ENCODE measurements at regions of chr11 and their contacts with region 1.

Region 1: GRCh38 chr11:97794876-97795275 is 1225.9 kb upstream of the CNTN5 start:
- DNase-seq: no peak
- ATAC-seq: no peak
- H3K4me3 Mint-ChIP-seq: no peak overlapping the region
- H3K27ac Mint-ChIP-seq: no peak overlapping the region
- H3K4me1 Mint-ChIP-seq: no peaks in the 10 kb centered on the region
- H3K27me3 Mint-ChIP-seq: no peaks in the 10 kb centered on the region

Region 2: DNA sequence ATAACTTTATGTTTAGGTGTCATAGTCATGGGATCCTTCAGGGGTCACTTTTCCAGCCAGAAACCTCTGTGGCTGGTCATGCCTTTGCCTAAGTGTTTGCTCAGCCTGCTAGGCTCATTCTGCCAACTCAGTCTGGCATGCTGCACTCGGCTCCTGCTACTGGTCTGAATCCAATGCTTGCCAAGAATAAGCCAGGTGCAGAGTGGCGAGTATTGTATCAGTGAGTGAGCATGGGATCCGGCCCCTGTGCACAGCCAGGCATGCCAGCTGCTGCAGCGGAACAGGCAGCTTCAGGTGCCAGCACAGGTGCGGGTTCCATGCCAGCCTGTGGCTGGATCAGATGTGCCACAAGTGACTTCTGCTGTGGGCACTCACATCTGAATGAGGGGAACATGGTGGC is 43.5 kb before region 1 on chr11:
- CTCF ChIA-PET with region 1: no interaction called
- POLR2A ChIA-PET with region 1: no interaction called
- intact Hi-C with region 1: loop called in 1 of 2 experiments (anchors 5 kb)
- DNase-seq: no peak
- ATAC-seq: no peak
- H3K4me3 Mint-ChIP-seq: no peak overlapping the region
- H3K27ac Mint-ChIP-seq: no peak overlapping the region
- H3K4me1 Mint-ChIP-seq: no peaks in the 10 kb centered on the region
- H3K27me3 Mint-ChIP-seq: no peaks in the 10 kb centered on the region